Activated CD4-positive, alpha-beta T cell treated with anti-CD3 and anti-CD28 coated beads, Interleukin-2, amount 10 ng/mL, durations not matched to agents 24 days and 14 days (primary cell): ENCODE measurements at regions of chr2 and their contacts with region 1.

Region 1: DNA sequence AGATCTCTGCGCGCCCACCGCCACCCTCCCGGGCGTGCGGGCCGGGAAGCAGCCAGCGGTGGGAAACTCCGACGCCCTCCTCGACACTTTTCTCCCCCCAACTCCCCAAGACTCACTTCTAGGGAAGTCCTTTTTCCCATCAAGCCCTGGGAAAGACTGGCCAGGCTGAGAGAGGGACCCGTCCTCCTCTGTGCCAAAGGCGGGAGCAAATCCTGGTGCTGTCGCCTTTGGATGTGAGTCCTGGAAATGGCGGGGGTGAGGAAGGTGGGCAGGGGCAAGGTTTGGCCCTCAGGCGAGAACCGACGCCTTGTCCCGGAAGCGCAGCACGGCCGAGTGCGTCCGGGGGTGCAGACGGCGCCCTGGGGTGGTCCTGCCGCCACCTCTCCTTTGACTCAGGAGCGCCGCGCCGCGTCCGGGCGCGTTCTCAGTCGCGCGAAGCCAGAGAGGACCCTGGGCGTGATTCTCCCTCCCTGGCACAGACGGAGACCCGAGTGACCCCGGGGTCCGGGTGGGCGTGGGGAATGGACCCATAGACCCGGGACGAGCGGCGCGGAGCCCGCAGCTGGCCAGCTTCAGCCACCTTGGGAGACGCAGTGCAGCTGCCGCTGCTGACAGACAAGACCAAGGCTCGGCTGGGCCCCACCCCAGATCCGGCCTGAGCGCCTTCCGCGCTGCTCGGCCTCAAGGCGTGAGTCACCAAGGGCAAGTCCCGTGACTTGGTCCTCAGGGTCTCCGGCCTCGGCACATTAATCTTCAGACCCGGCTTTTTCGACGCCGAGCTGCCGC is 3.5 kb upstream of the LBX2 start:
- DNase-seq: peak; percentile 85
- H3K4me3 Mint-ChIP-seq: peak overlapping the region; percentile 77
- H3K27ac Mint-ChIP-seq: peak overlapping the region; percentile 58
- H3K4me1 Mint-ChIP-seq: peaks cover 59% of the 10 kb centered on the region
- H3K27me3 Mint-ChIP-seq: peaks cover 46% of the 10 kb centered on the region

Region 2: GRCh38 chr2:74515981-74516633 is 13.2 kb after region 1 on chr2:
- intact Hi-C with region 1: loop called (anchors 1 kb)
- DNase-seq: peak; percentile 93
- H3K4me3 Mint-ChIP-seq: peak overlapping the region; percentile 79
- H3K27ac Mint-ChIP-seq: no peak overlapping the region
- H3K4me1 Mint-ChIP-seq: peaks cover 21% of the 10 kb centered on the region
- H3K27me3 Mint-ChIP-seq: peaks cover 81% of the 10 kb centered on the region

Region 3: GRCh38 chr2:74587664-74588277 is 84.9 kb after region 1 on chr2:
- intact Hi-C with region 1: loop called (anchors 1 kb)
- DNase-seq: peak; percentile 90
- H3K4me3 Mint-ChIP-seq: no peak overlapping the region
- H3K27ac Mint-ChIP-seq: peak overlapping the region; percentile 49
- H3K4me1 Mint-ChIP-seq: peaks cover 27% of the 10 kb centered on the region
- H3K27me3 Mint-ChIP-seq: peaks cover 22% of the 10 kb centered on the region

Region 4: DNA sequence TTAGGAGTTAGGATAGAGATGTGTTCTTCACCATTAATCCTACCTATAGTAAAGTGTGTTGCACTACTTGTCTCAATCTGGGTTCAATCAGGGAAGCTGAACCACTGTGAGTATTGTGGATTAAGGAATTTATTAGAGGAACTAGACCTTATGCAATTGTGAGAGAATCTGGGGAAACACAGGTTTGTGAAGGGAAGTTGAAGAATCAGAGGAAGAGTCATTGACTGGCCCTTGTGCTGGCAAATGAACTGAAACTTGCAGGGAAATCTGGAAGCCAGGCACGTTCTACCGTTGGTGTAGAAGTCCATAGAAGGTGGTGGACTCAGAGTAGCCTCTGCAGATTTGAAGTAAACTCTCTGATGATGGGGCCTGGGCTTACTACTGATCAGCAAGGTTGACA is 286.4 kb after region 1 on chr2:
- intact Hi-C with region 1: no loop called
- DNase-seq: no peak
- H3K4me3 Mint-ChIP-seq: no peak overlapping the region
- H3K27ac Mint-ChIP-seq: no peak overlapping the region
- H3K4me1 Mint-ChIP-seq: no peaks in the 10 kb centered on the region
- H3K27me3 Mint-ChIP-seq: peaks cover 12% of the 10 kb centered on the region